ENCODE measurements at regions of chr4 and their contacts with region 1.

Region 1: GRCh38 chr4:83516042-83516772 is 19.7 kb upstream of the GPAT3 start:
- DNase-seq: peak; percentile 88
- H3K4me3 ChIP-seq: no peak overlapping the region
- H3K27ac ChIP-seq: peak overlapping the region; percentile 39
- H3K4me1 ChIP-seq: peaks cover 5% of the 10 kb centered on the region; the same call in 1 of the 2 replicates
- H3K27me3 ChIP-seq: no peaks in the 10 kb centered on the region

Region 2: GRCh38 chr4:83961575-83961974 is 445.4 kb after region 1 on chr4:
- in situ Hi-C with region 1: loop called (anchors 25 kb)
- DNase-seq: peak; percentile 44
- H3K4me3 ChIP-seq: no peak overlapping the region
- H3K27ac ChIP-seq: no peak overlapping the region
- H3K4me1 ChIP-seq: no peaks in the 10 kb centered on the region
- H3K27me3 ChIP-seq: no peaks in the 10 kb centered on the region

Region 3: GRCh38 chr4:84258905-84259830 is 743.0 kb after region 1 on chr4:
- in situ Hi-C with region 1: loop called (anchors 25 kb)
- DNase-seq: peak; percentile 59
- H3K4me3 ChIP-seq: no peak overlapping the region
- H3K27ac ChIP-seq: no peak overlapping the region
- H3K4me1 ChIP-seq: no peaks in the 10 kb centered on the region
- H3K27me3 ChIP-seq: no peaks in the 10 kb centered on the region

Region 4: DNA sequence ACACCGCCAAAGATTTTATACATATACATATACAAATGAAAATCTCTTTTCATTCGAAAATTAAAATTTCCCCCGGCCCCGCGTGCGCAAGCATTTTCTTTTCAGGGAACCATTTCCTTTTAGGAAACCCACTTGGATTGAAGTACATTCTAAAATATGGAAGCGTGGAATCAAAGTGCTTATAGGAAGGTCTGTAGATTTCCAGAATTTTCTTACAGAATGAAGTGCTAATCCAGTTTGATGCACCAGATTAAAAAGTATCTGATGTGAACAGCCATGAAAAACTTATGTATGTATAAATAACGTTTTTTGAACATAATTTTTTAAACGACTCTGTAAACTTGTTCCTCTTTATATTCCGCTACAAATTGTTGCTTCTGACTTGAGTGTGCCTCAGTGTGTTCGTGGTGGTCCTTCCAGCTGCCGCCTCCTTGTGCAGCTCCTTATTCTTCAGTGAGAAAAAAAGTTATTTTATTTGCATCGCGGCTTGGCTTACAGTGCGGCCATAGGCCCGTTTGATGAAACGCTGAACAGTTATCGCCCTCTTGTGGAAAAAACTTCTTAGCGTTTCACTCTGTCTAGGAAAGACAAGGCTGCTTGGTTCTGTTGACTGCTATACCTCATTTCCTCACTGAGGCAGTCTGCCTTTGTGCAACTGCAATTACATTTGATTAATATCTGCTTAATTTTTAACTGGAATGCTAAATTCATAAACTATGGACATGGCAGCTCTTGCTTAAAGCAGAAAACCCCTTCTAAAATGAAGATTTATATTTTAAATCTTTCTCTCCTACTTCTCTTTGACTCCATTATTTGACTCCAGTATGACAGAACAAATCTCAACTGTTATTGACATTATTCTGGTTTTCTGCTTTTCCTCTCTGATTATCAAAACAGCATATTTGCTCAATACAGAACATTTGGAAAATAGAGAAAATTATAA is 987.6 kb after region 1 on chr4:
- in situ Hi-C with region 1: loop called (anchors 25 kb)
- DNase-seq: peak; percentile 83
- H3K4me3 ChIP-seq: no peak overlapping the region
- H3K27ac ChIP-seq: no peak overlapping the region
- H3K4me1 ChIP-seq: no peaks in the 10 kb centered on the region
- H3K27me3 ChIP-seq: peaks cover 86% of the 10 kb centered on the region